A673 (cell line): ENCODE measurements at regions of chr2 and their contacts with region 1.

Region 1: GRCh38 chr2:236363711-236364277 is 99.6 kb upstream of the ASB18 start:
- DNase-seq: no peak
- H3K4me3 ChIP-seq: no peak overlapping the region
- H3K27ac ChIP-seq: no peak overlapping the region
- H3K4me1 ChIP-seq: no peaks in the 10 kb centered on the region
- H3K27me3 ChIP-seq: peaks cover 79% of the 10 kb centered on the region
- CTCF ChIP-seq: no peak

Region 2: GRCh38 chr2:236026841-236027240 is 337.0 kb before region 1 on chr2:
- CTCF ChIA-PET with region 1: no interaction called
- POLR2A ChIA-PET with region 1: interaction called, 14 read pairs
- intact Hi-C with region 1: no loop called
- DNase-seq: no peak
- H3K4me3 ChIP-seq: no peak overlapping the region
- H3K27ac ChIP-seq: no peak overlapping the region
- H3K4me1 ChIP-seq: no peaks in the 10 kb centered on the region
- H3K27me3 ChIP-seq: no peaks in the 10 kb centered on the region
- CTCF ChIP-seq: no peak